WTC11 (cell line): ENCODE measurements at regions of chr10 and their contacts with region 1.

Region 1: DNA sequence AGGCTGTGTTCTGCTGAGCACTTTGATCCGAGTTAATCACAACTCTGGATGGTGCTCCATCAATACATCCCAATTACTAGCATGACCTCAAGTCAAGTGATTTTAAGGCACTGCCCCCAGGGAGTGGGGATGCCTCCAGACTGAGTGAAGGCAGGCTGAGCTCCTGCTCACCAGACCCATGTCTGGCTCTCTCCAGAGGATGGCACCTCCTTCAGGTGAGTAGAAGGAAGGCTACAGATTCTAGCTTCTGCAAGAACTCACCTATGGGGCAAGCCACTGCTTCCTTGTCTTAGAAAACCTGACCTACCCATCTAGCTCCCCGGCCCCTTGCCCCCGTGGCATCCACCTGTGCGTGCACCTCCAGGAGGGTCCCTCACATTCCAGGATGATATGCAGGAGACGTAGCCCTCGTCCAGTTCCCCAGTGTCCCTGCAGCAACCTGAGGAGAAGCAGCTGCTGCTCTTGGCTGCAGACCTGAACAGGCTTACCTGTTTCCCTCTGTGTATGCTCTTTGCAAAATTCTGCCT is 390.3 kb downstream of the GRID1 start:
- DNase-seq: peak; percentile 16
- ATAC-seq: peak; percentile 95
- H3K4me3 Mint-ChIP-seq: no peak overlapping the region
- H3K27ac Mint-ChIP-seq: no peak overlapping the region
- H3K4me1 Mint-ChIP-seq: peaks cover 11% of the 10 kb centered on the region
- H3K27me3 Mint-ChIP-seq: no peaks in the 10 kb centered on the region
- CTCF ChIP-seq: no peak

Region 2: GRCh38 chr10:85791818-85792532 is 184.4 kb before region 1 on chr10:
- CTCF ChIA-PET with region 1: interaction called, 10 read pairs
- POLR2A ChIA-PET with region 1: no interaction called
- DNase-seq: no peak
- ATAC-seq: no peak; the same call in 1 of the 2 replicates
- H3K4me3 Mint-ChIP-seq: no peak overlapping the region
- H3K27ac Mint-ChIP-seq: no peak overlapping the region
- H3K4me1 Mint-ChIP-seq: no peaks in the 10 kb centered on the region
- H3K27me3 Mint-ChIP-seq: no peaks in the 10 kb centered on the region
- CTCF ChIP-seq: no peak

Region 3: DNA sequence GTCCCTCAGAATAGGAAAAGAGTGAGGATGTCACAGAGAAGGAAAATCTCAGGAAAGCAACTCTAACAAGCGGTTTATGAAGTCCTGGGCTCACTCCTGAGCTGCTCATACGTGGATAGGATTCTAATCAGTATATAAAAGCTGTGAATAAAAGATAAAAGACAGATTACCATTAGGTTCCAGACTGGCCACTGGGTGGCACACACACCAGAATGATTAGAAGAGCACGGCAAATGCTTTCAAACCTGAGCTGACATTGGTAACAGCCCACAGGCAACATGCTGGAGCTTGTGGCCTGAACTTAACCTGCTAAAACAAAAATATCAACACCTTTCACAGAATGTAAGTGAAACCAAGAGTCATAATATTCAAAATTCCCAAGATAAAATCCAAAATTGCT is 19.5 kb after region 1 on chr10:
- CTCF ChIA-PET with region 1: interaction called, 11 read pairs
- POLR2A ChIA-PET with region 1: no interaction called
- DNase-seq: peak; percentile 31
- ATAC-seq: peak; percentile 70
- H3K4me3 Mint-ChIP-seq: no peak overlapping the region
- H3K27ac Mint-ChIP-seq: no peak overlapping the region; the same call in 1 of the 2 replicates
- H3K4me1 Mint-ChIP-seq: no peaks in the 10 kb centered on the region
- H3K27me3 Mint-ChIP-seq: no peaks in the 10 kb centered on the region
- CTCF ChIP-seq: no peak

Region 4: GRCh38 chr10:86592413-86592812 is 616.1 kb after region 1 on chr10:
- CTCF ChIA-PET with region 1: no interaction called
- POLR2A ChIA-PET with region 1: no interaction called
- DNase-seq: peak; percentile 35
- ATAC-seq: peak; percentile 83
- H3K4me3 Mint-ChIP-seq: no peak overlapping the region
- H3K27ac Mint-ChIP-seq: no peak overlapping the region
- H3K4me1 Mint-ChIP-seq: no peaks in the 10 kb centered on the region
- H3K27me3 Mint-ChIP-seq: no peaks in the 10 kb centered on the region
- CTCF ChIP-seq: no peak